ENCODE measurements at regions of chr15 and their contacts with region 1.

Region 1: DNA sequence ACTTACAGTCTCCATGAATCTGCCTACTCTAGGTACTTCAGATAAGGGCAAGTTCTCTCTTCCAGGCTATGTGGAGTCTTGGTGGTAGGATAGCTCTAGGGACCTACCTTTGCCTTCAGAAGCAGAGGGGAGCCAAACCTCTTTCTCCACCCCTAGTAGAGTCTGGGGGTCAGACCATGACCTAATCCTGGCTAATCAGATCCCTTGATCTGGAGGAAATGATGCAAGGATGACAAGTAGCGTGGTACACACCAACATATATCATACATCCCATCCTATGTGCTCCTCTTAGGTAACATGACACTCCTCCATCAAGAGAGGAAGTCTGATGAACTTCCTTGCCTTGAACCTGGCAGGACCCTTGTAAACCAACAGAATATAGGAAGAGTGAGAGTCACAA is 15.4 kb upstream of the PLA2G4F start:
- DNase-seq: no peak
- H3K4me3 ChIP-seq: no peak overlapping the region
- H3K27ac ChIP-seq: no peak overlapping the region
- H3K4me1 ChIP-seq: no peaks in the 10 kb centered on the region
- H3K27me3 ChIP-seq: no peaks in the 10 kb centered on the region
- CTCF ChIP-seq: no peak
- EP300 ChIP-seq: no peak
- POLR2A ChIP-seq: no peak

Region 2: DNA sequence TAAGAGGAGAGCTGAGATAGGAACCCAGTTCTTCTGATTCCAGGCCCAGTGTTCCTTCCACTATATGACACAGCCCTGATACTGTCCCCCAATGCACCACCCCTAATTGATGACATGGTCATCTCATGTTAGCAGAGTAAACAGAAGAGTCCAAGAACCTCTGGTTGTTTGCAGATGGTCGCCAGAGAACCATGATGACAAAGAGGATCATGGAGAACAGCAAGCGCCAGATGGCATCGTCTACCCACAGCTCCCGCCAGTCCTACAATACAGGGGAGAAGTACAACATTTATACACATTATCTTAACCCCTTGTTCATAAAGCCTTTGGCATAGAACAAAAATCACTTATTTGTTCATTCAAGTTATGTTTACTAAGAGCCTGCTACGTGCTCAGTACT is 54.9 kb after region 1 on chr15:
- in situ Hi-C with region 1: no loop called
- intact Hi-C with region 1: loop called (anchors 1 kb)
- DNase-seq: no peak
- H3K4me3 ChIP-seq: no peak overlapping the region
- H3K27ac ChIP-seq: no peak overlapping the region
- H3K4me1 ChIP-seq: peaks cover 0 to 4% (median 2%) of the 10 kb centered on the region in 4 donors
- H3K27me3 ChIP-seq: no peaks in the 10 kb centered on the region
- CTCF ChIP-seq: no peak
- EP300 ChIP-seq: no peak
- POLR2A ChIP-seq: no peak

Measured in transverse colon (tissue), 4 donors.